Activated T-helper 1 cell treated with anti-CD3 and anti-CD28 coated beads, Interleukin-12 subunit alpha, Interleukin-12 subunit beta, Interleukin-2, Interleukin-4 antibody, amounts not matched to agents 30 ng/mL and 10 ng/mL and 1 ng/mL, durations not matched to agents 14 hours and 24 hours and 36 hours (primary cell): ENCODE measurements at regions of chr9 and their contacts with region 1.

Region 1: DNA sequence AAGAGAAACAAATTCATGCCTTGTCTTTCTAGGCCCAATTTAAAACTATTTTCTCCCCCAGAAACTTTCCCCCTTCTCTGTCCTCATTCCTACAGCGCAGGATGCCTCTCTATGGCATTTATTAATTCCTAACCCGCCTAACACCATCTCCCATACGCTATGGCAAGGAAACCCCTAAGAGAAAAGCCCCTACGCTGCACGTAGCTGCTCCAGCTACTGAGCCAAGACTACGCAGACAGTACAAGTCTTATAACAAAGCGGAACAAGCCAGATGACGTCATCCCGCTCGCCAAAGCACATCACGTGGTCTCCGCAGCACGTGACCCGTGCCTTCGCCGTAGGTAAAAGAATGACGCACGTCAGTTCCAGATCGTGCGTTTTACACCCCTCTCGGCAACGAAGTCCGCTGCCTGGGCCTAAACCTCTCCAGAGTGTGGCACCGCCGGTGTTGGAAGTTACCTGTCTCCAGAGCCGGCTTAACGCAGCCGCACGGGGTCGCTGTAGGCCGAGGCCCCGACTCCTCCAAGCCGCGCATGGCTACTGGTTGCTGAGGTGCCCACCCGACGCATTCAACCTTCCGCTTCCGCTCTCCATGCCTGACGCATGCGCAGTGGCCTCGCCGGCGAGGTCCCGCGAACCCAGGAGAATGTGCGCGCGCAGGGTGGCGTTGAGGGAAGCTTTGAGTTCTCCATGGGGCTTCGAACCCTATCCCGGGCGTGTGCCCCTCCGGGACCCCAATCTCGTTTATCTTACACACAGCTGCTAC is at the start of gene TRMO:
- DNase-seq: peak; percentile 96
- H3K4me3 Mint-ChIP-seq: peak within 1 kb of the TSS; percentile 96
- H3K27ac Mint-ChIP-seq: peak within 1 kb of the TSS; percentile 99
- H3K4me1 Mint-ChIP-seq: peaks cover 59% of the 10 kb centered on the region
- H3K27me3 Mint-ChIP-seq: no peaks in the 10 kb centered on the region
- total RNA-seq, gene TRMO: 13.1 and 14.5 TPM in 2 replicates

Region 2: DNA sequence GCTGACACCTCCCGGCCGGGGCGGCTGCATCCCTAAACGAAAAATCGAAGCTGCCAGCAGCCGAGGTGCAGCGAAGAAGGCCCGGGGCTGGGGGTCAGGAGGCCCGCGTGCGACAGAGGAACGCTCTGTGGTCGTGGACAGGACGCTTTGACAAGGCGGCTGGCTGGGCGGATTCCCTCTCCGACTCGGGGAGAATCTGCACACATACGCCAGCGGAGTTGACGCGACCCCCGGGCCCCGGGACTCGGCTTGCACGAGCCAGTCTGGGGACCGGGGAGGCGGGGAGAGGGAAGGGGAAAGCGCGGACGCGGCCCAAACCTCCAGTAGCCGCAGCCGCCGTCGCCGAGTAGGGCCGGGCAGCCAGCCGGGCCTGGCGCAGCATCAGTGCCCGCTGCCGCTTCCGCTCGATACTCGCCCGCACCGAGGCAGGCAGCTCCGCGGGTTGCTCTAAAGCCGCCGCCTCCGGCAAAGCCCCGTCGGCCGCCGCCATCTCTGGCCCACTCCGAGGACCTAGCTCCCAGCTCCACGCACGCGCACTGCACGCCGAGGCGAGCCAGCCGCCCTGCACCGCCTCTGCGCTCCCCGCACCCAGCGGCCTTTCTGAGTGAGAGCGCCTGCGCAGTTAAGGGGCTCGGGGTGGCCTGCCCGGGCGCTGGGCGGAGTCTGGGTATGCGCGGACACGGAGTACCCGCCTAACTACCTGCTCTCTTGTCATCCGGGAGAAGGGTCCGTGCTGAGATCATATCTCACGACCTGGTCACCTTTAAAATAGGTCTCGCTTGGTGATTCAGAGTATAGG is 225.1 kb before region 1 on chr9 and contains the start of gene XPA:
- intact Hi-C with region 1: loop called (anchors 2 kb)
- DNase-seq: peak; percentile 98
- H3K4me3 Mint-ChIP-seq: peak within 1 kb of the TSS; percentile 85
- H3K27ac Mint-ChIP-seq: peak within 1 kb of the TSS; percentile 84
- H3K4me1 Mint-ChIP-seq: peaks cover 54% of the 10 kb centered on the region
- H3K27me3 Mint-ChIP-seq: no peaks in the 10 kb centered on the region
- total RNA-seq, gene XPA: 10.6 and 11.3 TPM in 2 replicates

Region 3: DNA sequence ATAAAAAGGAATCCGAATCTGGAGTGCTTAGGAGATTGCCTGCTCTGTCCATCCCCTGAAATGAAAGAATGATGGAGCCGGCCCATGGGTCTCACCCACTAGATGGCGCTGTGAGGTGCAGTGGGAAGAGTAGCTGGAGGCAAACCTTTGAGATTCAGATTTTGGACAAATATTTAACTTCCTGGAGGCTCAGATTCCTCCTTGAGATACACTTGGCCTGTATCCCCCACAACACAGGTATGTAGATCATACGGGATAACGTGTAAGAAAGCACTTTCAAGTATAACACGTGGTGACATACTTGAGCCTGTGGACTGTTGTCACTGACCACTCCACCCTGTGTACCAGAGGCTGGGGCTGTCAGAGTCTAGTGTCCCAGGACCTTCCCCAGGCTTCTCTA is 32.1 kb before region 1 on chr9:
- intact Hi-C with region 1: loop called (anchors 2 kb)
- DNase-seq: peak; percentile 51
- H3K4me3 Mint-ChIP-seq: no peak overlapping the region
- H3K27ac Mint-ChIP-seq: no peak overlapping the region
- H3K4me1 Mint-ChIP-seq: peaks cover 6% of the 10 kb centered on the region
- H3K27me3 Mint-ChIP-seq: peaks cover 4% of the 10 kb centered on the region

Region 4: GRCh38 chr9:97982683-97983588 is 60.8 kb after region 1 on chr9 and contains the start of gene ANP32B:
- intact Hi-C with region 1: loop called (anchors 1 kb)
- DNase-seq: peak; percentile 93
- H3K4me3 Mint-ChIP-seq: peak within 1 kb of the TSS; percentile 80
- H3K27ac Mint-ChIP-seq: peak within 1 kb of the TSS; percentile 78
- H3K4me1 Mint-ChIP-seq: peaks cover 46% of the 10 kb centered on the region
- H3K27me3 Mint-ChIP-seq: no peaks in the 10 kb centered on the region
- total RNA-seq, gene ANP32B: 305 and 313 TPM in 2 replicates

Region 5: DNA sequence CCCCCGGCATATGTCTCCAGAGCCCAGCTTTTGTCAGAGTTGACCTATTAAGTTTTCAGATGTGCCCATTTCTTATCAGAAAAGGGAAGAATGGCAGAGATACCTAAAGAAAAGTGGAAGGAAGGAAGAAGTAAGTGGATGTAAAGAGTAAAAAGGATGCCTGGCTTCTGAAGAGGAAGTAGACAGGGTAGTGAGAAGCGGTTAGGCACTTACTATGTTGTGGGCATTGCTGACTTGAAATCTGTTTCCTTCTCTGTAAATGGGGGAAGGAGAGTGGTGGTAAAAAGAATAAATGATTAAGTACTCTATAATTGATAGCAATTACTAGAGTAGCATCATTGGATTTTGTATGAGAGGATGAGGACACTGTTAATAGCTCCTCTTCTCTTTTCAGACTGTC is 70.9 kb after region 1 on chr9:
- intact Hi-C with region 1: no loop called
- DNase-seq: no peak
- H3K4me3 Mint-ChIP-seq: peak overlapping the region; percentile 49
- H3K27ac Mint-ChIP-seq: peak overlapping the region; percentile 66
- H3K4me1 Mint-ChIP-seq: peaks cover 79% of the 10 kb centered on the region
- H3K27me3 Mint-ChIP-seq: no peaks in the 10 kb centered on the region

Region 6: GRCh38 chr9:98056269-98057137 is 134.4 kb after region 1 on chr9 and contains the start of gene NANS:
- intact Hi-C with region 1: loop called (anchors 1 kb)
- DNase-seq: peak; percentile 90
- H3K4me3 Mint-ChIP-seq: peak within 1 kb of the TSS; percentile 98
- H3K27ac Mint-ChIP-seq: peak within 1 kb of the TSS; percentile 97
- H3K4me1 Mint-ChIP-seq: peaks cover 33% of the 10 kb centered on the region
- H3K27me3 Mint-ChIP-seq: no peaks in the 10 kb centered on the region
- total RNA-seq, gene NANS: 54.4 and 55.5 TPM in 2 replicates

Region 7: DNA sequence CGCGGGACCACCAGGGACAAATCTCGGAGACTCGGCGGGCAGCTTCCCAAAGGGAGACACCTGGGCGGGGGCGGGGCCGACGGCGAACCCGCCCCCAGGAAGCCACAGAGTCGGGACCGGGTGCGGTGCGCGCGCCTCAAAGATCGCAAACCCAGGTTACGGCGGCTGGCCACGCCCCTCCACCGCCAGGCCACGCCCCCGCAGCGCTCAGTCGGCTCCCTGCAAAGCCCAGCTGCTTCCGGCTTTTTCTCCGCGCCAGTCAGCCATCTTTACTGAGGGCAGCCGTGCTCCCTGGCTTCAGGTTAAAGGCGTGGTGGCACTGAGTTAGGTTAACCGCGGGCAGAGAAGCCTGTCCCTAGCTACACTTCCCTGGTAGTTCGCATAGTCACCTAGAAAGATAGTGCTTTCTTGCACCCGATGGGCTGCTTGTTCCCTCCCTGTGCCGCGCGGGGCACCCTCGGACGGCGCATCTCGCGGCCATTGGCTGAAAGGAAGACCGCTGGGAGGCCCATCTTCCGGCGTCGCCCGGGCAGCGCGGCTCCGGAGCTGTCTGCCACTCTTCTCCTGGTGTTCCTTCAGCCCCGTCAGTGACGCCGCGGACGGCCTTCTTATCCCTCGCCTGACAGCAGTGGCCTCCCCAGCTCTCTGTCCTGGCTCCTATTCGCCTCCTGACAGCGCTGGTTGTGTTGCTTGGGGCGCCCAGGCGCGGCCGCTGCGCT is 333.6 kb after region 1 on chr9 and contains the start of gene TBC1D2:
- intact Hi-C with region 1: loop called (anchors 1 kb)
- DNase-seq: peak; percentile 96
- H3K4me3 Mint-ChIP-seq: peak within 1 kb of the TSS; percentile 89
- H3K27ac Mint-ChIP-seq: peak within 1 kb of the TSS; percentile 94
- H3K4me1 Mint-ChIP-seq: peaks cover 27% of the 10 kb centered on the region
- H3K27me3 Mint-ChIP-seq: peaks cover 3% of the 10 kb centered on the region
- total RNA-seq, gene TBC1D2: 1.8 and 2.2 TPM in 2 replicates